Ascending aorta (tissue), 2 donors: ENCODE measurements at regions of chrX and their contacts with region 1.

Region 1: GRCh38 chrX:140918407-140919038 is 83.9 kb upstream of the SPANXB1 start:
- DNase-seq: peak in 1 of 2 donors; percentile 64
- H3K4me3 ChIP-seq: no peak overlapping the region
- H3K27ac ChIP-seq: peak overlapping the region in 1 of 2 donors; percentile 53
- H3K4me1 ChIP-seq: peaks cover 0 to 2% of the 10 kb centered on the region in 2 donors
- H3K27me3 ChIP-seq: no peaks in the 10 kb centered on the region
- CTCF ChIP-seq: peak in 2 of 3 experiments; percentile 52 to 58

Region 2: DNA sequence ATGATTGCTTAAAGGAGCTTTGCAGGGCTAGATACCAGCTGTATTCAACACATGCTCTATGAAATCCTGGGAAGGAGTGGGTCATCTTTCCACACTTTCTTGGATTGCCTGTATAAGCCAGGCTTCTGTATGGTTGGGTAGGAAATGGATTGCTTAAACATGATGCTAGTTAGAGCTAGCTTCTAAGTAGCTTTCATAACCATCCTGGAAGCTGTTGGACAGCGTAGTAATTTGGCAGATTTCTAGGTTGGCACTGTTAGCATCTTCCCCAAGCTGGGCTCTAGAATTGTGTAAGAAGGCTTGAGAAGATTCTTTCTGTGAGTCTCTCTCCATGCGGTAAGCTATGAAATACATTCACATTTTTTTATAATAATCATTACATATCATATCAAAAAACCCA is 81.6 kb before region 1 on chrX:
- intact Hi-C with region 1: no loop called
- DNase-seq: no peak
- H3K4me3 ChIP-seq: no peak overlapping the region
- H3K27ac ChIP-seq: no peak overlapping the region
- H3K4me1 ChIP-seq: no peaks in the 10 kb centered on the region
- H3K27me3 ChIP-seq: no peaks in the 10 kb centered on the region
- CTCF ChIP-seq: no peak

Region 3: GRCh38 chrX:141127146-141127545 is 208.6 kb after region 1 on chrX:
- intact Hi-C with region 1: loop called (anchors 5 kb)
- DNase-seq: no peak
- H3K4me3 ChIP-seq: no peak overlapping the region
- H3K27ac ChIP-seq: no peak overlapping the region
- H3K4me1 ChIP-seq: peaks cover 0 to 14% of the 10 kb centered on the region in 2 donors
- H3K27me3 ChIP-seq: no peaks in the 10 kb centered on the region
- CTCF ChIP-seq: no peak

Region 4: GRCh38 chrX:141278302-141278701 is 359.8 kb after region 1 on chrX:
- intact Hi-C with region 1: loop called (anchors 5 kb)
- DNase-seq: no peak
- H3K4me3 ChIP-seq: no peak overlapping the region
- H3K27ac ChIP-seq: no peak overlapping the region
- H3K4me1 ChIP-seq: no peaks in the 10 kb centered on the region
- H3K27me3 ChIP-seq: no peaks in the 10 kb centered on the region
- CTCF ChIP-seq: peak in 2 of 3 experiments; percentile 30 to 47

Region 5: DNA sequence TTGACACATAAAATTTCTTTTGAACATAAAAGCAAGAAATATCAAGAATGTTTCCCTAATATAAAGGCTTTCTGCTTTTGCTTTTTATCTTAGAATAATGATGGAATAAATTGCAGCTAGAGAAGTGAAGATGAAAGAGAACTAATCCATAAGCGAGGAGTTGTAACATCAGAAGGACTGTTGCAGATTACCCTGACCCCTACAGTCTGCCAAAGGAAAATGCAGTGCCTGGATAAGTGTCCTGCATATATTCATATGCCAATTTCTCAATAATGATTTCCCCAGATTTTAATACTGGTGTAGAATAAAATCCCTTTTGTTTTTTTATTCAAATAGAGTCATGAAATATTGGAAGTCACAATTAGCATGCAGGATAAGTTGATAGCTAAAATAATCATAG is 1170.7 kb after region 1 on chrX:
- intact Hi-C with region 1: loop called (anchors 5 kb)
- DNase-seq: no peak
- H3K4me3 ChIP-seq: no peak overlapping the region
- H3K27ac ChIP-seq: no peak overlapping the region
- H3K4me1 ChIP-seq: no peaks in the 10 kb centered on the region
- H3K27me3 ChIP-seq: no peaks in the 10 kb centered on the region
- CTCF ChIP-seq: peak in 2 of 3 experiments; percentile 31 to 55